ENCODE measurements at regions of chr12 and their contacts with region 1.

Region 1: DNA sequence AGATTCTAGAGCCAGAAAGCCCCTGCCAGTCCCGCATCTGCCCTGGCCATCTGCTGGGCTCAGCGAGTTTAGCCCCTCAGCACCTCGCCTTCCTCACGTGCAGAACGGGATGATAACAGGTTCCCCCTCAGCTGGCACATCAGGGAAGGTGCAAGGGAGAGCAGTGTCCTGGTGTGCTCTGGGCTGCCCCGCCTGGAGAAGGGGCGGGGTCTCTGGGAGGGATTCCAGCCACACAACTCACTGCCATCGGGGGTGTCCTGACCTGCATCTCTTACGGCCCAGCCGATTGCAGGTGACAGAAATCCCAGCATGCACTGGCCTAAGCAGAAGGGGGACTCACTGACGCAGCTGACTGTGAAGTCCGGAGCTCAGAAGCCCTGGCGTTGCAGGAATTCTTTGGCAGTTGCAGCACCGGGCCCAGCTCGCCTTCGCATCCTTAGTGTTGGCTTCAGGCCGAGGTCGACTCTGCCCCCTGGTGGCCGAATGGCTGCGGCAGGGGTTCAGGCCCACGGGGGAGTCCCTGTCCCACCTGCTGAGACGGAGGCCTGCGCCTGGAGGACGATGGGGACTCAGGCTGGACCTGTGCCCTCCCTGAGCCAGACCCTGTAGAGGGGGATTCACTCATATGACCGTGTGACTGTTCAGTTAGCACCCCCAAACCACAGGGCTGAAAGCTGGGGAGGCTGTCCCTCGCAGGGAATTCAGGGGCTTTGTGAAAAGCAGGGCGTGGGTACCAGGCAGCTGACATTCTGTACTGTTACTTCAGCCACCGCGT is 178.6 kb downstream of the ADGRD1 start:
- DNase-seq: peak; percentile 46 to 76 (median 58)
- H3K4me3 ChIP-seq: no peak overlapping the region
- H3K4me3 Mint-ChIP-seq: no peak overlapping the region
- H3K27ac ChIP-seq: no peak overlapping the region
- H3K27ac Mint-ChIP-seq: peak overlapping the region in 1 of 8 donors; percentile 63
- H3K4me1 ChIP-seq: no peaks in the 10 kb centered on the region
- H3K4me1 Mint-ChIP-seq: peaks cover 0 to 5% (median 0%) of the 10 kb centered on the region in 3 donors
- H3K27me3 ChIP-seq: no peaks in the 10 kb centered on the region
- H3K27me3 Mint-ChIP-seq: peaks cover 0 to 2% of the 10 kb centered on the region in 2 donors

Region 2: DNA sequence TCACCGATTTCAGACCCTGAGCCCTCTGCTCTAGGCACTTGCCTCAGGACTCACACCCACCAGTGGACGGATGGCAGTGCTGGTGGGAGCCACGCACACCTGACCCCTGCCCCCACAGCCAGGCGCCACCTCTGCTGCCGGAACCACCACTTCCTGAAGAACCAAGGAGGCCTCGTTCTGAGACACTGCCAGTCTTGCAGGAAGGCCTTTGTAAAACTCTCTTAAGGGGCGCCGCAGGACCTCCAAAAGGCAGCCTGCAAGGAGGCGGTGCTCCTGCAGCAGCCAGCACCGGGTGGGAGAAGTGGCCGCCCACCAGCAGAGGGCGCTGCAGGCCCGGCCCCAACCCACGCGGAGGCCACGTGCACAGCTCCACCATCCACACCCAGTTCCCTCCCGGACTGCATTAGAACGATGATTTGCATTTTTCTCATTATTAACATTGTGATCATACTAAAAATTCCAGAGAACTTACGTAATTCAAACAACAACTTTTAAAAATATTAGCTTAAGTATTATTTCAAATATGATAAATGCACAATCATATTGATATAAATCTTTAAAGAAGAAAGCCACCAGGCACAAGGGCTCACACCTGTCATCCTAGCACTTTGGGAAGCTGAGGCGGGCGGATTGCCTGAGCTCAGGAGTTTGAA is 306.0 kb before region 1 on chr12:
- CTCF ChIA-PET with region 1: interaction called, 26 read pairs
- POLR2A ChIA-PET with region 1: no interaction called
- DNase-seq: peak; percentile 62 to 84 (median 67)
- H3K4me3 ChIP-seq: no peak overlapping the region
- H3K4me3 Mint-ChIP-seq: no peak overlapping the region
- H3K27ac ChIP-seq: no peak overlapping the region
- H3K27ac Mint-ChIP-seq: peak overlapping the region in 4 of 8 donors; percentile 17 to 92 (median 52)
- H3K4me1 ChIP-seq: no peaks in the 10 kb centered on the region
- H3K4me1 Mint-ChIP-seq: peaks cover 12 to 37% (median 28%) of the 10 kb centered on the region in 3 donors
- H3K27me3 ChIP-seq: no peaks in the 10 kb centered on the region
- H3K27me3 Mint-ChIP-seq: peaks cover 0 to 3% of the 10 kb centered on the region in 2 donors

Region 3: DNA sequence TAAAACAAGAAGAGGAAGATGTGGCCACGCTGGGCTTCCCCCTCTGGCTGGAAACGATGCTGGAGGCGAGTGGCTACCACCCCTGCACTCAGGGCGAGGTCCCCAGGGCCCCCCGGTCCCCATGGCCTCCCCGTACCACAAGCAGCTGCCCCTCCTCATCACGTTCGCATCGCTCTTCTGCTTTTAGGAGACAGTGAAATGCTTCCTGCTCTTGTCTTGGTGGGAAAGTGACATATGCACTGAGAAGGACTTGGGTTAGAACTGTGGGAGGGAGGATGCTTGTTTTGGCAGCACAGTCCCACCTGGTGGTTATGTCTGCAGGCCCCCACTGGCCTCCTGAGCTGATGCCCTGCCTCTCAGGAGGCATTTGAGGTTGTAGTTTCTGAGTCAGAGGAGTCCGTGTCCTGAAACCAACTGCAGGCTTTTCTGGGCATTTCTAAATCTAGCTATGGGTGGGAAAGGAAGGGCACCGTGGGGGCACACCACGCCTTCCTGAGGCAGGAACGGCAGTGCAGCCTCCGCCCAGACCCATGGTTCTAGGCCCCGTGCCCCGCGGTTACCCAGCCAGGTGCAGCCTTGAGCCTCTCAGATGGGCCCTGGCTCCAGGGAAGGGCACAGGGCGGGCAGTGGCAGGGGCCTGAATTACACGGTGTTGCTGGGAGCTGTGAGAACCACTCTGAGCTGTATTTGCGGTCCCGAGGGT is 39.3 kb before region 1 on chr12:
- CTCF ChIA-PET with region 1: no interaction called
- POLR2A ChIA-PET with region 1: no interaction called
- DNase-seq: peak in 1 of 5 donors; percentile 39
- H3K4me3 ChIP-seq: no peak overlapping the region
- H3K4me3 Mint-ChIP-seq: peak overlapping the region in 3 of 7 donors; percentile 6 to 75 (median 48)
- H3K27ac ChIP-seq: no peak overlapping the region
- H3K27ac Mint-ChIP-seq: peak overlapping the region in 1 of 8 donors; percentile 83
- H3K4me1 ChIP-seq: no peaks in the 10 kb centered on the region
- H3K4me1 Mint-ChIP-seq: peaks cover 0 to 14% (median 4%) of the 10 kb centered on the region in 3 donors
- H3K27me3 ChIP-seq: no peaks in the 10 kb centered on the region
- H3K27me3 Mint-ChIP-seq: peaks cover 0 to 6% of the 10 kb centered on the region in 2 donors

Region 4: DNA sequence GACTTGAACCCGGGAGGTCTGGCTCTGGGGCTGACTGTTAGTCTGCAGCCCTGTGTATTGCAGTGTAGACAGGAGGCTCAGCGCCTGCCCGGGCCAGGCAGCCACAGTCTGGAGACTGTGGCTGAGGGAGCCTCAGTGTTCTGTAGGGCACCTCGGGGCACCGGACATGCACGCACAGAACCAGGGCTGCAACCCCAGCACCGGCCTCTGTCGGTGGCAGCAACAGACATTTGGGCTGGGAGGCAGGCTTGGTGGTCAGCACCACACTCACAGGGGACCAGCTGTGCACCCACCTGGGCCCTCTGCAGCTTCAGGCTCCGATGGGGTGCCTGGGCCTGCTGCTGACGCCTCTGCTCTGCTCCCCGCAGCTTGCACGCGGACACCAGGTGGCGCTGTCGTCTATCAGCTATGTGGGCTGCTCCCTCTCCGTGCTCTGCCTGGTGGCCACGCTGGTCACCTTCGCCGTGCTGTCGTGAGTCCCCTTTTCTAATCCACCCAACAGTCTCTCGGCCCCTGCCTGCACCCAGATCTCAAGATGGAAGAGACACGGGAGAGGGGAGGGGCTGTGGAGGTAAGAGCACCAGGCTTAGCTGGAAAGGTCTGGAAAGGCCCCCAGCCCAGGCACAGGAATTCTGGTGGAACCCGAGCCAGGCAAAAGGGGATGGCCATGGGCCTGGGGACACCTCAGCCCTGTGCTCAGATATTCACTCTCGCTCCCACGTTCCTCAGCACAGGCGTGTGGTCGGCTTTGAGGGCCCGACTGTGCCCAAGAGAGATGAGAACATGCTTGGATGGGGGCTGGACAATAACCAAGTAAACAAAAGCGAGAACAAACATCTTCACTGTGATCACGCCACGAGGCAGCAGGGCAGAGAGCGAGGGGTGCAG is 27.6 kb before region 1 on chr12:
- CTCF ChIA-PET with region 1: interaction called, 39 read pairs
- POLR2A ChIA-PET with region 1: no interaction called
- DNase-seq: peak; percentile 54 to 77 (median 62)
- H3K4me3 ChIP-seq: no peak overlapping the region
- H3K4me3 Mint-ChIP-seq: peak overlapping the region in 6 of 7 donors; percentile 44 to 84 (median 66)
- H3K27ac ChIP-seq: no peak overlapping the region
- H3K27ac Mint-ChIP-seq: peak overlapping the region in 4 of 8 donors; percentile 21 to 85 (median 73)
- H3K4me1 ChIP-seq: peaks cover 16% of the 10 kb centered on the region
- H3K4me1 Mint-ChIP-seq: peaks cover 14 to 19% (median 17%) of the 10 kb centered on the region in 3 donors
- H3K27me3 ChIP-seq: no peaks in the 10 kb centered on the region
- H3K27me3 Mint-ChIP-seq: peaks cover 3 to 9% of the 10 kb centered on the region in 2 donors